Aorta (tissue), 5 donors: ENCODE measurements at regions of chr9 and their contacts with region 1.

Region 1: DNA sequence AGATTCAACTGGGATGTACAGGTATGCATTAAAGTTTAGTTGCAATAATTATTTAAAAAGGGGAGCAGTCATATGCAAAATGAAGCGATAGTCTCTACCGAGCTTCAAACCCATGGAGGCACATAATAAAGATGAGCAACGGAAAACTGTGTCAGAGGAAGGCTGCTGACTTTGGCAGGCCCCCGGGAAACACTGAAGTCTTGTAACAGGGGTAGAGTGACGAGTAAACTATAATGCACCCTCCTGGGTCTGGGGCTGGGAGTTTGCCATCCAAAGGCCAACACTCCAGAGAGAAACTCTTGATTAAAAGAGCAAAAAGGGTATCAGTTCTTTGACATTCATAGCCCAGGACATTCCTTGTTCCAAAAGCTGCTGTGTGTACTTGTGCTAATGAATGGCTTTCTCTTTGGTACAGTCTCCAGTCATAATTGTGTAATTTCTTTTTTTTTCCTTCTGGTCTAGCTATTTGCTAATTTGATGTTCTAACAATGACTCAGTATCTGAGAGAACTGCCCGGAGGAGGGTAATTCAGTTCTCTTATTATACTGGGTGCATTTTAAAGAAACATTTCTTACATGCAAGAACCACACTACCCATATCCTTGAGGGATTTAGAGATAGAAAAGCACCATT is 59.2 kb downstream of the TNC start:
- DNase-seq: no peak
- ATAC-seq: peak; percentile 70
- H3K4me3 ChIP-seq: no peak overlapping the region
- H3K27ac ChIP-seq: no peak overlapping the region
- H3K4me1 ChIP-seq: peaks cover 6 to 14% of the 10 kb centered on the region in 2 donors
- H3K27me3 ChIP-seq: no peaks in the 10 kb centered on the region

Region 2: DNA sequence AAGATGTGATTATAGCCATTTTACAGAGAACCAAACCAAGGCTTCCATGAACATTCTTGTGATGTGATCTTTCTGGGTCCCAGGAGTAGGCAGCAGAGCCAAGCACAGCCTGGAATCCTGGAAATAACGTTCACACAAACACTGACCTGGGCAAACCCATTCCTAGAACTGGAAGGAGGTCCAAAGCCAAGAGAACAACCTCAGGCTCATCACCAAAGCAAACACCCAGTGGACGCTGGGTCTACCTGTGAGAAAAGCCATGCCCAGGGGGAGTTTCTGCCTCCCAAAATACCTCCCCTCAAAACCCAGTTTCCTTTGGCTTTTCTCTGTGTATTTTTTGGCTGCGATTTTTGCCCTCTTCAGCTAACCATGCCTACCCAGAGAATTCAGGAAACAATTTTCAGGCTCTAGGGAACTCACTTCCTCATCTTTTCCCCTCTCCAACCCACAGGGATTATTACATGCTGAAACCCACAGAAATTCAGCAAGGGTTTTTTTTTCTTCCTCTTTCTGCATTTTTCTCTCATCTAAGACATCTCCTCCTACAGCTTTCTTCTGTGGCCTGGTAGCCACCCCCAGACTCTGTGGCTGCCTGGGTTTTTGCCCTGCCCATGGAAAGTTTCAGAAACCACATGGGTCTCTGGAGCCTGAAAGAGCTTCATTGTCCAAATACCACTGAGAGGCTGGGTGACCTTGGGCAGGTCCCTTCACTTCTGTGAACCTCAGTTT is 15.9 kb before region 1 on chr9:
- intact Hi-C with region 1: loop called in 1 of 2 experiments (anchors 2 kb)
- DNase-seq: peak in 1 of 2 donors; percentile 61
- ATAC-seq: peak; percentile 66
- H3K4me3 ChIP-seq: no peak overlapping the region
- H3K27ac ChIP-seq: peak overlapping the region; percentile 51 to 86
- H3K4me1 ChIP-seq: peaks cover 0 to 2% of the 10 kb centered on the region in 2 donors
- H3K27me3 ChIP-seq: no peaks in the 10 kb centered on the region

Region 3: GRCh38 chr9:115117999-115118878 is 59.4 kb after region 1 on chr9 and contains the start of gene TNC:
- intact Hi-C with region 1: loop called in 1 of 2 experiments (anchors 10 kb)
- DNase-seq: peak; percentile 80 to 89
- ATAC-seq: peak; percentile 79
- H3K4me3 ChIP-seq: peak within 1 kb of the TSS; percentile 9 to 84
- H3K27ac ChIP-seq: peak within 1 kb of the TSS; percentile 52 to 55
- H3K4me1 ChIP-seq: no peaks in the 10 kb centered on the region
- H3K27me3 ChIP-seq: peaks cover 0 to 1% of the 10 kb centered on the region in 2 donors
- total RNA-seq, gene TNC: 117 to 1,047 TPM

Region 4: GRCh38 chr9:115146581-115147021 is 87.8 kb after region 1 on chr9:
- intact Hi-C with region 1: loop called in 1 of 2 experiments (anchors 1 kb)
- DNase-seq: peak in 1 of 2 donors; percentile 45
- ATAC-seq: peak; percentile 85
- H3K4me3 ChIP-seq: no peak overlapping the region
- H3K27ac ChIP-seq: peak overlapping the region; percentile 90 to 94
- H3K4me1 ChIP-seq: peaks cover 0 to 10% of the 10 kb centered on the region in 2 donors
- H3K27me3 ChIP-seq: no peaks in the 10 kb centered on the region

Region 5: DNA sequence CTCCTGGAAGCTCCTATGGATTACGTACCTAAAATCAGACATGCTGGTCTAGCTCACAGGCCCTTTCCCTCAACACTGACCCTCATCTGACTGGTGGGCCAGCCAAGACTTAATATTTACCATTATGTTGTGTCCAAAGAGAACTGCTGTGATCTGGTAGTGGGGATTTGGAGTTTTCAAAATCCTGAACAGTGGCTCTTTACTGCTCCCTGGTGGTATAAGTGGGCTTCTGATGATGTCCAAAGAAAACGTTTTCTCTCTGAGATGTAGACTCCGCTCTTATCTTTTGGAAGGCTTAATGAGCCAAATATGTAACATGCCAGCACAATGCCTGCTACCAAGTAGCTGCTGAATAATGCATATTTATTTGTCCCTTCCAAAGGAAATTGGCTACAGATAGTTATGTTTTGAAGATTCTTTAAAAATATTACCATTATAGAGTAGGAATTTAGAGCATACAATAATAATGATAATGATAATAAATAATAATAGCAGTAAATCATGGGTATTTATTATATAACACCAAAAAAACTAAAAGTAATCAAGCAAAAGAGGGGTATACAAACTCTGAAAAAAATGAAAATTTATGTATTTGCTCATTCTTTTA is 465.8 kb after region 1 on chr9:
- intact Hi-C with region 1: loop called in 1 of 2 experiments (anchors 10 kb)
- DNase-seq: no peak
- ATAC-seq: peak; percentile 85
- H3K4me3 ChIP-seq: no peak overlapping the region
- H3K27ac ChIP-seq: no peak overlapping the region
- H3K4me1 ChIP-seq: peaks cover 0 to 2% of the 10 kb centered on the region in 2 donors
- H3K27me3 ChIP-seq: no peaks in the 10 kb centered on the region